ENCODE measurements at regions of chr14 and their contacts with region 1.

Region 1: GRCh38 chr14:93655078-93655750 is 133.1 kb downstream of the PRIMA1 start:
- DNase-seq: peak in 1 of 2 donors; percentile 22
- ATAC-seq: peak in 1 of 8 donors; percentile 57
- H3K4me3 ChIP-seq: no peak overlapping the region
- H3K27ac ChIP-seq: no peak overlapping the region
- H3K4me1 ChIP-seq: no peaks in the 10 kb centered on the region
- H3K27me3 ChIP-seq: peaks cover 0 to 11% (median 0%) of the 10 kb centered on the region in 7 donors
- CTCF ChIP-seq: peak; percentile 17 to 70 (median 57)

Region 2: GRCh38 chr14:93059917-93060545 is 595.2 kb before region 1 on chr14:
- intact Hi-C with region 1: no loop called
- DNase-seq: peak in 1 of 2 donors; percentile 43
- ATAC-seq: peak in 1 of 8 donors; percentile 7
- H3K4me3 ChIP-seq: no peak overlapping the region
- H3K27ac ChIP-seq: peak overlapping the region in 5 of 10 donors; percentile 3 to 48 (median 36)
- H3K4me1 ChIP-seq: peaks cover 19 to 80% (median 56%) of the 10 kb centered on the region in 9 donors
- H3K27me3 ChIP-seq: no peaks in the 10 kb centered on the region
- CTCF ChIP-seq: no peak

Region 3: GRCh38 chr14:93857081-93857480 is 201.9 kb after region 1 on chr14:
- intact Hi-C with region 1: no loop called
- DNase-seq: no peak
- ATAC-seq: no peak
- H3K4me3 ChIP-seq: no peak overlapping the region
- H3K27ac ChIP-seq: no peak overlapping the region
- H3K4me1 ChIP-seq: no peaks in the 10 kb centered on the region
- H3K27me3 ChIP-seq: peaks cover 0 to 55% (median 27%) of the 10 kb centered on the region in 7 donors
- CTCF ChIP-seq: no peak

Region 4: DNA sequence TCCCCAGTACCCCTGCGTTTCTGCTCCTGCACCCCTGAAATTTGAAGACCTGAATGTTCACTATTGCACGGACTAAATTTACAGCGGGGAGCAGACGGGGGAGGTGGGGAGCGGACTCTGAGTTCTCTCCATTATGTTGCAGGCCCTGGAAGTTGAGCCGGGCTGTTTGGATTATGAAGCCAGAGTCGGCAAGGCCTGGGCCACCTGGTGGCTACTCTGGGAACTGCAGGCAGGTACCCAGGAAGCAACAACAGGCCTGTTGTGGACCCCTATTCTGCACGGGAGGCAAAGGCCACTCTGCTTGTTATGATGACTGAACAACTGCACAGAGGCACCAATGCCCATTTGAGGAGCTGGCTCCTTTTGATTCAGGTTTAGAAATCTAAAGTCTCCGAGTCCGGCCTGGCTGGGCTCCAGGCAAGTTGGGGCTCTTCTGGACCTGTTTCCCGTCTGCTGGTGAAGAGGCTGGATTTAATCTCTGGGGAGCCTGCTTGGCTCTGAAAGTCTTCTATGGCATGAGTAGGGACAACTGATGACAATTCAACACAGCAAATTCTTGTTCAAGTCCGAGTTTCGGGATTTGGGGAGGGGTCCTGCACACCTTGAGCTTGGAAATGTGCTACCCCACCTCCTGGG is 237.8 kb after region 1 on chr14:
- intact Hi-C with region 1: loop called (anchors 1 to 10 kb)
- DNase-seq: peak; percentile 62 to 72
- ATAC-seq: peak in 7 of 8 donors; percentile 49 to 77 (median 66)
- H3K4me3 ChIP-seq: no peak overlapping the region
- H3K27ac ChIP-seq: no peak overlapping the region
- H3K4me1 ChIP-seq: peaks cover 0 to 8% (median 0%) of the 10 kb centered on the region in 9 donors
- H3K27me3 ChIP-seq: peaks cover 0 to 24% (median 9%) of the 10 kb centered on the region in 7 donors
- CTCF ChIP-seq: peak; percentile 93 to 99 (median 97)

Region 5: GRCh38 chr14:93906341-93907329 is 251.4 kb after region 1 on chr14:
- intact Hi-C with region 1: loop called in 2 of 10 experiments (anchors 5 kb)
- DNase-seq: no peak
- ATAC-seq: peak in 2 of 8 donors; percentile 52 to 65
- H3K4me3 ChIP-seq: no peak overlapping the region
- H3K27ac ChIP-seq: no peak overlapping the region
- H3K4me1 ChIP-seq: no peaks in the 10 kb centered on the region
- H3K27me3 ChIP-seq: peaks cover 0 to 17% (median 10%) of the 10 kb centered on the region in 7 donors
- CTCF ChIP-seq: peak in 8 of 9 donors; percentile 33 to 74 (median 56)

Region 6: DNA sequence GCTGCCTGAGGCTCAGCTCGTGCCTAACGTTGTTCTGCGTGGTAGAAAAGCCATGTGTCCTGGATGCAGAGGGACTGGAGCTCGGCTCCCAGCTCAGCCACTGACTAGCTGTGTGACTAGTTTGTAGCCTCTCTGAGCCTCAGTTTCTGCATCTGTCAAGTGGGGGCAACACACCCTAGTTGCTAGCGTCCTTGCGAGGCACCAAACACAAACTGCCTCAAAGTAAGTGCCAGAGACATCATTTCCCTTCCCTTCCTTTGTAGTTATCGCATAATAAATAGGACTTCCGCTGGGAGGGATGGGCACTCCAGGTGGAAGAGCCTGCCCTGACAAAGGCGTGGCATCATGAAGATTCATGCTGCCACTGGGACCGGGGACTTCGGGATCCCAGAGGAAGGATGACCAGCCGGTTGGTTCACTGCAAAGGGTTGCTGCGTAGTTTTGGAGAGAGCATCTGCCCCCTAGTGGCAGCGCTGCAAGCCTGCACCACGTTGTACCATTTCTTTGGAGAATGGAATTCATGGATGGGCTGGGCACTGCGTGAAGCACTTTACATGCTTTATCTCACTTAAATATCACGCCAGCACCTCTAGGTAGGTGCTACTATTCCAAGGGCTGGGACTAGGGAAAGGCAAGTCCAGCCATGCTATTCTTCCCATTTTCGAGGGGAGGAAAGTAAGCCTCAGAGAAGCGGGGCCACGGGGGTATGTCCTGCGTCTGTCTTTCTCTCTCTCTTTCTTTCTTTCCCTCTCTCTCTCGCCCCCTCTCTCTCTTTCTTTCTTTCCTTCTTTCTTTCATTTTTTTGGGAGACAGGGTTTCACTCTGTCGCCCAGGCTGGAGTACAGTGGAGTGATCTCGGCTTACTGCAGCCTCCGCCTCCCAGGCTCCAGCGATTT is 346.5 kb after region 1 on chr14:
- intact Hi-C with region 1: loop called in 3 of 10 experiments (anchors 5 to 10 kb)
- DNase-seq: peak; percentile 38 to 49
- ATAC-seq: peak; percentile 67 to 85 (median 80)
- H3K4me3 ChIP-seq: no peak overlapping the region
- H3K27ac ChIP-seq: no peak overlapping the region
- H3K4me1 ChIP-seq: peaks cover 3 to 31% (median 17%) of the 10 kb centered on the region in 9 donors
- H3K27me3 ChIP-seq: peaks cover 0 to 22% (median 0%) of the 10 kb centered on the region in 7 donors
- CTCF ChIP-seq: peak; percentile 91 to 98 (median 97)